Calu3 (cell line): ENCODE measurements at regions of chr4 and their contacts with region 1.

Region 1: DNA sequence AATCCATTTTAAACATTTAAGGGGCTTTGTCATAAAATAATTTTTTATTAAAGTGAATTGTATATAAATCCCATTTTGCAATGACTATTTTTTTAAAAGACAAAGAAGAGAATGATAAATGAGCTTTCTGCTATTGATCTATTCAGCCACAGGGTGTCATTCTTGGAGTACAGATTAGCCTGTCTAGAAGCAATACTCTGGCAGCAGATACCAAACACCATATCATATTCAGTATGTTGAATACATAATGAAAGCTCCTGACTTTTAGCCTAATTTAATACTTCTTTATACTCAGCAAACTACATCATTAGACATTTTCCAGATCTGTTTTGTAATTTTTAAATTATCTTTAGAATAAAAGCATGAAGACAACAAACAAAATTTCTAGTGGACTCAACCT is 496.3 kb downstream of the PDGFC start:
- DNase-seq: peak; percentile 5
- H3K4me3 Mint-ChIP-seq: no peak overlapping the region
- H3K27ac Mint-ChIP-seq: no peak overlapping the region
- H3K4me1 Mint-ChIP-seq: peaks cover 11% of the 10 kb centered on the region
- H3K27me3 Mint-ChIP-seq: no peaks in the 10 kb centered on the region
- CTCF ChIP-seq: peak; percentile 19

Region 2: GRCh38 chr4:156294577-156294976 is 180.7 kb before region 1 on chr4:
- CTCF ChIA-PET with region 1: interaction called, 7 read pairs
- intact Hi-C with region 1: loop called (anchors 10 kb)
- DNase-seq: peak; percentile 43
- H3K4me3 Mint-ChIP-seq: no peak overlapping the region
- H3K27ac Mint-ChIP-seq: peak overlapping the region; percentile 75
- H3K4me1 Mint-ChIP-seq: peaks cover 24% of the 10 kb centered on the region
- H3K27me3 Mint-ChIP-seq: no peaks in the 10 kb centered on the region
- CTCF ChIP-seq: no peak

Region 3: DNA sequence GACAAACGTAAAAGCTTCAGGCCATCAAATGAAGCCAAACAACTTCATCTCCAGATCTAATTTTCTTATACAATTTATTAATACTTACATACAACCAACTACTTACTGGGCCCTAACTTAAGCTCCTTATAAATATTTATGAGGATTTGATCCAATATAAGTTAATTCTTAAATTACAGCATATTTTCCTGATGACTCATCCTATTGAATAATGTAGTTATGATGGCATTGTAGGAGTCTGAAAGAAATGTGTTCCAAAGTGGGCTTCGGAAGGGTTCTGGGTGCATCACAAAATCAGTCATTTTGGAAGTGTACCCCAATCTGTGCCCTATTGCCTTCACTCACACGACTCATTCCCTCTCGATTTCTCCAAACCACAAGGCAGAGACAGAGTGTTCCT is 66.6 kb before region 1 on chr4:
- CTCF ChIA-PET with region 1: no interaction called
- intact Hi-C with region 1: no loop called
- DNase-seq: no peak
- H3K4me3 Mint-ChIP-seq: no peak overlapping the region
- H3K27ac Mint-ChIP-seq: no peak overlapping the region
- H3K4me1 Mint-ChIP-seq: no peaks in the 10 kb centered on the region
- H3K27me3 Mint-ChIP-seq: no peaks in the 10 kb centered on the region
- CTCF ChIP-seq: no peak

Region 4: DNA sequence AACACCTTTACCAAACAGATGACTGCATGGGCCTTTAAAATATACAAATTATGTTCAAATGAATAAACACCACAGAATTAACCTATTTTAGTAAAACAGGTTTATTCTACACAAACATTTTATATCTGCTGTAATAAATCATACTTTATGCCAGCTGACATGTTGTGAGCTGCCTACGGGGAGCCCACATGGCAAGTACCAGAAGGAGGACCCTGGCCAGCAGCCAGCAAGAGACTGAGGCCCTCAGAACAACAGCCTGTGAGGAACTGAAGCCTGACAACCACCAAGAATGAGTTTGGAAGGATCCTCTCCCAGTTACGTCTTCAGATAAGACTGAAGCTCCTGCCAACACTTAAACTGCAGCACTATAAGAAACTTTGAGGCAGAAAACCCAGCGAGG is 119.3 kb after region 1 on chr4:
- CTCF ChIA-PET with region 1: no interaction called
- intact Hi-C with region 1: no loop called
- DNase-seq: no peak
- H3K4me3 Mint-ChIP-seq: no peak overlapping the region
- H3K27ac Mint-ChIP-seq: no peak overlapping the region
- H3K4me1 Mint-ChIP-seq: peaks cover 10% of the 10 kb centered on the region
- H3K27me3 Mint-ChIP-seq: no peaks in the 10 kb centered on the region
- CTCF ChIP-seq: no peak

Region 5: DNA sequence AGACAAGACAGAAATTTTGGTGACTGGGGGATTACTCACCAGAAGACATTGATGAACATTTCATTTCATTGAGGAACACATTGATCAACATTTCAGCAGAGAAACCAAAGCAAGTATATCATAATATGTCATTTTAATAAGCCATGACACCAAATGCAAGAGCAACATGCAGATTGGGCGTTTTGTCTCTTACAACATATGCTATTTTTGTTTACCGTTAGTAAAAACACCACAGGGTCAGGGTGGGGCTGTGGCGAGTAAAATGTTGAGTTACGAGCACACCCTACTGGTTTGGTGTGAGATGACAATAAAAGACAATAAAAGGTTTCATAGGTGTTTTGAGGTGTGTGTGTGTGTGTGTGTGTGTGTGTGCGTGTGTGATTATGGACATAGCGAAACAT is 201.8 kb after region 1 on chr4:
- CTCF ChIA-PET with region 1: interaction called, 5 read pairs
- intact Hi-C with region 1: loop called (anchors 1 kb)
- DNase-seq: peak; percentile 42
- H3K4me3 Mint-ChIP-seq: no peak overlapping the region
- H3K27ac Mint-ChIP-seq: peak overlapping the region; percentile 39
- H3K4me1 Mint-ChIP-seq: peaks cover 11% of the 10 kb centered on the region
- H3K27me3 Mint-ChIP-seq: no peaks in the 10 kb centered on the region
- CTCF ChIP-seq: peak; percentile 37

Region 6: DNA sequence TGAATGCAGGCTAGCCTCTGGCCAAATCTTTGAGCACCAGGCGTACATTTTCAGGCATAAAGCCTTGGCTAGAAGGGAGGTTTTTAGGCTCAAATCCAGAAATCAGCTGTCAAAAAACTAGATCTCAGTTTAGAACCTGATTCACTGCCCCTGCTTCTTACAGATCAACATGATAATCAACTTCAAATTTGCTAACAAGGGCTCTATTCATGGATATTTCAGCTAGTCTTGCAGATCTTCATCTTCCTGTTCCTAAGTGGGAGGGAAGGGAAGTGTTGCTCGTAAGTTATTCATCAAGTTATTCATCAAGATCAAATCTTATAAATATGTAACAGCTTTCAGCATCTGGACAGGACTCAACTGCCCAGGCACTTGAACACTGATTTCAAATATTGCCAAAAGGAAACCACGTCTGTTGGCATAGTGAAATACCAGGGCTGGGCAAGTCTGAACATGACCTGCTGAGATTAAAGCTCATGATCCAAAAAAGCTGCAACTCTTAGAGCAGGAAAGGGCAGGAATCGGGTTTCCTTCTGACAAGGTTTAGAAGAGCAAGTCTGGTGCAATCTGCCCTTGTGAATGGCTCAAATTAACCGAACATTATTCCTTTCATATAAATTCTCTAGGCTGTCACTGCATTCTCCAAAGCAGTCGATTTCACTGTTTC is 296.0 kb after region 1 on chr4:
- CTCF ChIA-PET with region 1: no interaction called
- intact Hi-C with region 1: loop called (anchors 10 kb)
- DNase-seq: peak; percentile 41
- H3K4me3 Mint-ChIP-seq: peak overlapping the region; percentile 24
- H3K27ac Mint-ChIP-seq: peak overlapping the region; percentile 74
- H3K4me1 Mint-ChIP-seq: peaks cover 21% of the 10 kb centered on the region
- H3K27me3 Mint-ChIP-seq: no peaks in the 10 kb centered on the region
- CTCF ChIP-seq: no peak

Region 7: GRCh38 chr4:157045507-157046127 is 570.3 kb after region 1 on chr4:
- CTCF ChIA-PET with region 1: interaction called, 16 read pairs
- intact Hi-C with region 1: loop called (anchors 1 kb)
- DNase-seq: peak; percentile 43
- H3K4me3 Mint-ChIP-seq: no peak overlapping the region
- H3K27ac Mint-ChIP-seq: no peak overlapping the region
- H3K4me1 Mint-ChIP-seq: peaks cover 23% of the 10 kb centered on the region
- H3K27me3 Mint-ChIP-seq: no peaks in the 10 kb centered on the region
- CTCF ChIP-seq: peak; percentile 25

Region 8: DNA sequence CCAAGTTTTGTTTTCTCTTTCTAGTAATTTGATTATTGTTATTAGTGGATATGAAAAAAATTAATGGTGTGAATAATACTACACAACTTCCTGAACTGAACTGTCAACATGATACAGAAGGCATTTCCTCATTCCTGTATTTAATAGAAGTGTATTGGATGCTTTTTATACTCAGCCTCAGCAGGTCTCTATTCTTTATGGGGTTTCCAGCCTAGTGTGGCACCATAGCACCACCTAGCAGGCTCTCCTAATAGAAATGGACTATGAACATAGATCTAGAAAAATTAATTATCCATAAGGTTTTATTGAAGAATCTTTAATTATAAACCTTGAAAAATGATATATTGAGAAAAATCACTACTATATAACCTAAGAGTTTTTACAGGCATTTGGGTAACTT is 653.1 kb after region 1 on chr4:
- CTCF ChIA-PET with region 1: interaction called, 4 read pairs
- intact Hi-C with region 1: loop called (anchors 1 kb)
- DNase-seq: peak; percentile 31
- H3K4me3 Mint-ChIP-seq: no peak overlapping the region
- H3K27ac Mint-ChIP-seq: no peak overlapping the region
- H3K4me1 Mint-ChIP-seq: no peaks in the 10 kb centered on the region
- H3K27me3 Mint-ChIP-seq: no peaks in the 10 kb centered on the region
- CTCF ChIP-seq: no peak

Region 9: DNA sequence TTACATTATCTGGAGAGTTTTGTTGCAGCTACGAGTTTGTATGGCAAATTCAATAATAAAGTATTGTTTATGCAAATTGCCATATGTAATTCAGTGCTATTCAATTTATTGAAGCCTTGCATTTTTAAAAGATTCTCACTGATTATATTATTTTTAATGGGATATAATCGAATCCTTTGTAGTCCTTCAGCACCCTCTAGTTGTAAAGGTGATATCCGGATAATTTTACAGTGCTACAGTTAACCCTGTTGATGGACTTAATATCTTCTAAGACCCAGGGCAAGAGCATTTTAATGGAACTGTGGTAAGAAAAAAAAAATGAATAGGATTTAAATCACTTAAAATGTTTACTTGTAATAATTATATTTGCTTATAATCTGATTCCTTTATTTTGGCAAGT is 696.7 kb after region 1 on chr4:
- CTCF ChIA-PET with region 1: no interaction called
- intact Hi-C with region 1: loop called (anchors 1 kb)
- DNase-seq: no peak
- H3K4me3 Mint-ChIP-seq: no peak overlapping the region
- H3K27ac Mint-ChIP-seq: no peak overlapping the region
- H3K4me1 Mint-ChIP-seq: no peaks in the 10 kb centered on the region
- H3K27me3 Mint-ChIP-seq: no peaks in the 10 kb centered on the region
- CTCF ChIP-seq: no peak